GM12878 (cell line): ENCODE measurements at regions of chr1 and their contacts with region 1.

Region 1: GRCh38 chr1:176374967-176375569 is 87.9 kb upstream of the PAPPA2 start:
- DNase-seq: no peak
- ATAC-seq: peak; percentile 94
- H3K4me3 ChIP-seq: no peak overlapping the region
- H3K27ac ChIP-seq: no peak overlapping the region
- H3K4me1 ChIP-seq: no peaks in the 10 kb centered on the region
- H3K27me3 ChIP-seq: no peaks in the 10 kb centered on the region
- CTCF ChIP-seq: peak; percentile 83 to 91 (median 89)
- EP300 ChIP-seq: no peak
- POLR2A ChIP-seq: no peak
- RAD21 ChIP-seq: peak; percentile 86

Region 2: DNA sequence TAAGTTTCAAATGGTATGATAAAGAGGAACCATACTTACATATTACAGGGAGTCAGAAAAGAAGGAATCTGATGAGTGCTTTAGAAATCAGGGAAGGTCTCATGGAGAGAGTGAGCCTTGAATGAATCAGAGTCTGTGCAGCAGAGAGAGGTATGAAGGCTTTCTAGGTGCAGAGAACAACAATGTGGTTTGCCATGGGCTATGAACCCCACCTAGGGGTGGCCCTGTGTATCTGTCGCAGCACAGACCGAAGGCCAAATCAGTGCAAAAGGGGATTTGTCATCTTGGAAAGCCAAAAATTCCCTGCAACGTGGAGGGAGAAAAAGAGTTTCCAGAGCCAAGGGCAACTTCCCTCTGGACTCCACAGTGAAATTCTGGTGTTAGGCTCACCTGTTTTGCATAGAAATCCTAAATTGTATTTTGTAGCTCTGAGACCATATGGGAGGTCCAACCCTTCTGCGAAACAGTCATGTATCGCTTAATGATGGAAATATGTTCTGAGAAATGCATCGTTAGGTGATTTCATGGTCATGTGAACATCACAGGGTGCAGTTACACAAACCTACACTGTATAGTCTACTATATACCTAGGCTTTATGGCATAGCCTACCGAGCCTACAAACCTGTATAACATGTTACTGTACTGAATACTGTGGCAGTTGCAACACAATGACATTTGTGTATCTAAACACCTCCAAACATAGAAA is 91.6 kb after region 1 on chr1:
- CTCF ChIA-PET with region 1: interaction called, 4 read pairs
- POLR2A ChIA-PET with region 1: no interaction called
- RAD21 ChIA-PET with region 1: no interaction called
- SMC1A ChIA-PET with region 1: no interaction called
- in situ Hi-C with region 1: no loop called
- intact Hi-C with region 1: loop called (anchors 2 kb)
- DNase-seq: no peak
- ATAC-seq: peak; percentile 81
- H3K4me3 ChIP-seq: no peak overlapping the region
- H3K27ac ChIP-seq: no peak overlapping the region
- H3K4me1 ChIP-seq: no peaks in the 10 kb centered on the region
- H3K27me3 ChIP-seq: no peaks in the 10 kb centered on the region
- CTCF ChIP-seq: peak; percentile 40 to 56 (median 51)
- EP300 ChIP-seq: no peak
- POLR2A ChIP-seq: no peak
- RAD21 ChIP-seq: peak; percentile 47

Region 3: DNA sequence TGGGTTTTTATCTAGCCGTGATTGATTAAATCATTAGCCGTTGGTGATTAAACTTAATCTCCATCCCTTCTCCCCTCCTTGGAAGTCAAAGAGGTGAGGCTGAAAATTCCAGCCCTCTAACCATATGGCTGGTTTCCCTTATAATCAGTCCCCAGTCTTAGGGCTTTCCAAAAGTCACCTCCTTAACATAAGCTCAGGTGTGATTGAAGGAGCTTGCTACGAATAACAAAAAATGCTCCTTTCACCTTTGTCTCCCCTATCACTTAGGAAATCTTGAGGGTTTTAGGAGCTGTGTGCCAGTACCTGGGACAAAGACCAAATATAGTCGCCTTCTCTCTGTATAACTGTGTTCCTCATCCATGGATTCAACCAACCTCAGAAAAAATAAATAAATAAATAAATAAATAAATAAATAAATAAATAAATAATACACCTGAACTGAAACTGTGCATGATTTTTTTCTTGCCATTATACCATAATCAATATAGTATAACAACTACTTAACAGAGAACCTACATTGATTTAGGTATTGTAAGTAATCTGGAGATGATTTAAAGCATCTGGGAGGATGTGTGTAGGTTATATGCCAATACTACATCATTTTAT is 170.1 kb after region 1 on chr1:
- CTCF ChIA-PET with region 1: interaction called, 4 read pairs
- POLR2A ChIA-PET with region 1: no interaction called
- RAD21 ChIA-PET with region 1: no interaction called
- SMC1A ChIA-PET with region 1: no interaction called
- in situ Hi-C with region 1: no loop called
- intact Hi-C with region 1: loop called (anchors 5 kb)
- DNase-seq: no peak
- ATAC-seq: no peak
- H3K4me3 ChIP-seq: no peak overlapping the region
- H3K27ac ChIP-seq: no peak overlapping the region
- H3K4me1 ChIP-seq: no peaks in the 10 kb centered on the region
- H3K27me3 ChIP-seq: no peaks in the 10 kb centered on the region
- CTCF ChIP-seq: no peak
- EP300 ChIP-seq: no peak
- POLR2A ChIP-seq: no peak
- RAD21 ChIP-seq: no peak

Region 4: GRCh38 chr1:176682830-176683535 is 307.9 kb after region 1 on chr1:
- CTCF ChIA-PET with region 1: no interaction called
- POLR2A ChIA-PET with region 1: no interaction called
- RAD21 ChIA-PET with region 1: no interaction called
- SMC1A ChIA-PET with region 1: no interaction called
- in situ Hi-C with region 1: loop called (anchors 10 kb)
- intact Hi-C with region 1: no loop called
- DNase-seq: no peak
- ATAC-seq: no peak
- H3K4me3 ChIP-seq: no peak overlapping the region
- H3K27ac ChIP-seq: no peak overlapping the region
- H3K4me1 ChIP-seq: no peaks in the 10 kb centered on the region
- H3K27me3 ChIP-seq: no peaks in the 10 kb centered on the region; a peak in 1 of 4 replicates
- CTCF ChIP-seq: no peak
- EP300 ChIP-seq: no peak
- POLR2A ChIP-seq: no peak
- RAD21 ChIP-seq: no peak

Region 5: GRCh38 chr1:176691251-176692228 is 316.5 kb after region 1 on chr1:
- CTCF ChIA-PET with region 1: interaction called, 8 read pairs
- POLR2A ChIA-PET with region 1: no interaction called
- RAD21 ChIA-PET with region 1: no interaction called
- SMC1A ChIA-PET with region 1: interaction called, 7 read pairs
- in situ Hi-C with region 1: loop called (anchors 10 kb)
- intact Hi-C with region 1: loop called (anchors 1 kb)
- DNase-seq: peak; percentile 17
- ATAC-seq: peak; percentile 94
- H3K4me3 ChIP-seq: no peak overlapping the region
- H3K27ac ChIP-seq: no peak overlapping the region
- H3K4me1 ChIP-seq: no peaks in the 10 kb centered on the region
- H3K27me3 ChIP-seq: no peaks in the 10 kb centered on the region; a peak in 1 of 4 replicates
- CTCF ChIP-seq: peak; percentile 69 to 73 (median 70); a peak in 5 of 6 replicates
- EP300 ChIP-seq: no peak
- POLR2A ChIP-seq: no peak
- RAD21 ChIP-seq: peak; percentile 61

Region 6: GRCh38 chr1:176843352-176844297 is 468.6 kb after region 1 on chr1:
- CTCF ChIA-PET with region 1: interaction called, 3 read pairs
- POLR2A ChIA-PET with region 1: no interaction called
- RAD21 ChIA-PET with region 1: no interaction called
- SMC1A ChIA-PET with region 1: no interaction called
- in situ Hi-C with region 1: no loop called
- intact Hi-C with region 1: loop called (anchors 1 kb)
- DNase-seq: no peak
- ATAC-seq: no peak
- H3K4me3 ChIP-seq: no peak overlapping the region
- H3K27ac ChIP-seq: no peak overlapping the region
- H3K4me1 ChIP-seq: no peaks in the 10 kb centered on the region
- H3K27me3 ChIP-seq: 0 out of 4 replicates have a peak, but pooled peaks cover 0 to 2% of the 10 kb centered on the region in 2 experiments
- CTCF ChIP-seq: peak; percentile 19 to 48 (median 35); a peak in 4 of 6 replicates
- EP300 ChIP-seq: no peak
- POLR2A ChIP-seq: no peak
- RAD21 ChIP-seq: peak; percentile 64

Region 7: DNA sequence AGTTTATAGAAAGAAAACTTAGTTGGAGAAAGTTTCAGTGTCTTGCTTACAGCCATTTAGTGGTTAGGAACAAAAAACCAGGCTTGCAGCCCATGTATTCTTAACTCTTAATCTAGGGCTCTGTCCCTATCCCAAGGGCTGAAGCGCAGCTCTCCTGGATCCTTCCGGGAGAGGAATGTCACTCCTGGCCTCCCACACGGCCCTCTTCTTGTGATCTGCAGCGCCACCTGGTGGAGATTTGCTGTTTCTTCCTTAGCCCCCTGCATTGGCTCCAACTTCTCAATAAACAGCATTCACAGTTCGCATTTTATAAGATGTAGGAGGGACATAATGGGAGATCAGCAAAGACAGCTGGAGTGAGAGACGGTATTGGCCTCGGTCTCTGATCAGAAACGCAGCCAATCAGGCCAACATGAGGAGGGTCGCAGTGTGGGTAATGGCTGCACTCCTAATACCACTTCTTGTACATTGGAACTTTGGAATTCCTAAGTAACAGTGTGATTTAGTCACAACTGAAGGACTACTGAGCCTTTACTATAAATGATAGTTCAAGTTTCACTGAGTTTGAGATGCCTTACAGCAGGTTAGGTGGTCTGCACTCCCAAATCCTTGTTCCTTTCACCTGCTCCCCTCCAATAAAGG is 506.0 kb after region 1 on chr1:
- CTCF ChIA-PET with region 1: interaction called, 4 read pairs
- POLR2A ChIA-PET with region 1: no interaction called
- RAD21 ChIA-PET with region 1: no interaction called
- SMC1A ChIA-PET with region 1: no interaction called
- in situ Hi-C with region 1: loop called (anchors 10 kb)
- intact Hi-C with region 1: loop called (anchors 1 kb)
- DNase-seq: no peak
- ATAC-seq: peak; percentile 87
- H3K4me3 ChIP-seq: no peak overlapping the region
- H3K27ac ChIP-seq: no peak overlapping the region
- H3K4me1 ChIP-seq: no peaks in the 10 kb centered on the region
- H3K27me3 ChIP-seq: peaks cover 3% of the 10 kb centered on the region in 2 experiments; a peak in 2 of 4 replicates
- CTCF ChIP-seq: peak; percentile 78 to 86 (median 82)
- EP300 ChIP-seq: no peak
- POLR2A ChIP-seq: no peak
- RAD21 ChIP-seq: peak; percentile 72